H1 (cell line): ENCODE measurements at regions of chr10 and their contacts with region 1.

Region 1: GRCh38 chr10:58781873-58782488 is 269.3 kb downstream of the BICC1 start:
- DNase-seq: no peak
- H3K4me3 ChIP-seq: no peak overlapping the region
- H3K27ac ChIP-seq: no peak overlapping the region
- H3K4me1 ChIP-seq: no peaks in the 10 kb centered on the region
- H3K27me3 ChIP-seq: no peaks in the 10 kb centered on the region
- CTCF ChIP-seq: peak in 2 of 3 experiments; percentile 40 to 54; a peak in 2 of 4 replicates
- EP300 ChIP-seq: no peak
- POLR2A ChIP-seq: no peak
- RAD21 ChIP-seq: peak; percentile 80 to 83

Region 2: DNA sequence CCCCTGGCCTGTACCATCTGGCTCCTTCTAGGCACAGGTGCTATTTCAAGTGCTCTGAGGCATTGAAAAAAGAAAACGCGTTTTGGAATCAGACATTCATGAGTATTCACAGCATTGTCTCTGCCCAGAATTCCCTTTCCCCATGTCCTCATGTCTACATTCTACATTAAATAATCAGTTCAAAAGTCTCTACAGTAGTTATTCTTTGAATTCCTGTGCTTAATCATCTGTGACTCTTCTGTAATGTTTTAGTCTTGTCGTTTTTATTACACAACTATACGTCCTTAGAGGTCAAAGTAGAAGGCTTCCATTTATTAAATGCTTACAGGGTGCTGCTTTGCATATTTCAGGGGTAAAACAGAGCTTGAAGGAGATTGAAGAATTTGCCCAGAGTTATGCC is 173.6 kb before region 1 on chr10:
- CTCF ChIA-PET with region 1: no interaction called
- POLR2A ChIA-PET with region 1: no interaction called
- DNase-seq: no peak
- H3K4me3 ChIP-seq: no peak overlapping the region
- H3K27ac ChIP-seq: no peak overlapping the region
- H3K4me1 ChIP-seq: no peaks in the 10 kb centered on the region
- H3K27me3 ChIP-seq: no peaks in the 10 kb centered on the region
- CTCF ChIP-seq: no peak
- EP300 ChIP-seq: no peak
- POLR2A ChIP-seq: no peak
- RAD21 ChIP-seq: no peak

Region 3: DNA sequence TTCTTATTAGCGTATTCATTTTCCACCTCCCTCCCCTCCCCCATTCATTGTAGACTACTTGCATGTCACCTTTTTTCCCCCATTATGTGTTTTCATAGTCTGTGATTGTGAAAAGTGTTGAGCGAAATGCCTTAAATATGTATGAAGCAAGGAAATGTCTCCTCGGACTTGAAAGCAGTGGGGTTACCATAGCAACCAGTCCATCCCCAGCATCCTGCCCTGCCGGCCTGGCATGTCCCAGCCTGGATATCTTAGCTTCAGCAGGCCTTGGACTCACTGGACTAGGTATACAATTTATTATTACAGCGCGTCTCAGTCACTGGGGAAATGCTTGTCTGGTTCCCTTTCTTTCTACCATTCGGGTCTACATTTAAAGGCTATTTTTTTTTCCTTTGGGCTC is 14.3 kb after region 1 on chr10:
- CTCF ChIA-PET with region 1: interaction called, 12 read pairs
- POLR2A ChIA-PET with region 1: no interaction called
- DNase-seq: no peak
- H3K4me3 ChIP-seq: no peak overlapping the region
- H3K27ac ChIP-seq: no peak overlapping the region
- H3K4me1 ChIP-seq: no peaks in the 10 kb centered on the region
- H3K27me3 ChIP-seq: no peaks in the 10 kb centered on the region
- CTCF ChIP-seq: no peak
- EP300 ChIP-seq: no peak
- POLR2A ChIP-seq: no peak
- RAD21 ChIP-seq: no peak